ENCODE measurements at regions of chr4 and their contacts with region 1.

Region 1: GRCh38 chr4:158172261-158173258 is at the start of gene GASK1B:
- DNase-seq: no peak
- H3K4me3 ChIP-seq: peak within 1 kb of the TSS; percentile 36 to 49
- H3K27ac ChIP-seq: peak within 1 kb of the TSS; percentile 77
- H3K4me1 ChIP-seq: peaks cover 37% of the 10 kb centered on the region
- H3K27me3 ChIP-seq: no peaks in the 10 kb centered on the region
- CTCF ChIP-seq: peak in 2 of 3 experiments; percentile 40 to 68
- POLR2A ChIP-seq: no peak
- total RNA-seq, gene GASK1B: 24.3 TPM

Region 2: GRCh38 chr4:157992038-157992705 is 180.4 kb before region 1 on chr4:
- intact Hi-C with region 1: loop called (anchors 5 kb)
- DNase-seq: no peak
- H3K4me3 ChIP-seq: peak overlapping the region; percentile 27 to 41
- H3K27ac ChIP-seq: peak overlapping the region; percentile 40
- H3K4me1 ChIP-seq: peaks cover 14% of the 10 kb centered on the region
- H3K27me3 ChIP-seq: no peaks in the 10 kb centered on the region
- CTCF ChIP-seq: peak; percentile 54 to 75 (median 64)
- POLR2A ChIP-seq: no peak

Measured in vagina (tissue), 2 donors.